ENCODE measurements at regions of chr12 and their contacts with region 1.

Region 1: GRCh38 chr12:49088190-49088931 is 6.2 kb downstream of the DHH start:
- DNase-seq: peak; percentile 61 to 66 (median 62)
- ATAC-seq: peak; percentile 94
- H3K4me3 ChIP-seq: no peak overlapping the region
- H3K4me1 ChIP-seq: peaks cover 26% of the 10 kb centered on the region
- CTCF ChIP-seq: peak; percentile 76

Region 2: GRCh38 chr12:48988030-48988649 is 100.2 kb before region 1 on chr12:
- intact Hi-C with region 1: no loop called
- DNase-seq: peak; percentile 61 to 87 (median 79)
- ATAC-seq: peak; percentile 82
- H3K4me3 ChIP-seq: no peak overlapping the region
- H3K4me1 ChIP-seq: peaks cover 4% of the 10 kb centered on the region
- CTCF ChIP-seq: peak; percentile 74

Region 3: DNA sequence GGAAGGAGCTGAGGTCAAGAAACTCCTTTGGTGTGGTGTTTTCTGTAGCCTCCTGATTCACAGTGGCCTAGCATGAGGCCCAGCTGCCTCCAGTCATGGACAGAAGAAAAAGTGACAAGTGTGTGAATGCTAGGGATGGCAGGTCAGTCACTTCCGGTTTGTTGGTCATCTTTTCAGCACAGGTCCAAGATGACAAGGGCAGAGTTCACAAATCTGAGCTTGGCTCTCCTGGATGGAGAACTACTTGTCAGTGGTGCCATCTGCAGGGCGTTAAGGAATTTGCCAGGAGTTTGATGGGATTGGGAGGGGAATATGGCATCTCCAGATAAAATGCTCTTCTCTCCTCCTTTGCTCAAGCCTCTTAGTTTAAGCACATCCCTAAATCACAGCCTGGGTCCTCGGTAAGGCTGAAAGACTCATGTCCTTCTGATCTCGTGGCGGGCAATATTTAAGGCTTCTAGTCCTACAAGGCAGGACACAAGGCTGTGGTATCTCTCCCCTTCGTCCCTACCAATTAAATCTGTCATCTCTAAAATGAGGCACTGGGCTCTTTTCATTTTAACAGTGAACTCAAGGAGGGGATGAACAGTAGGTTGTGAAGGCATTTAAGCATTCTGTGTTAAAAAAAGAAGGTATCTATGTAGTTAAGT is 32.8 kb after region 1 on chr12:
- intact Hi-C with region 1: loop called in 1 of 2 experiments (anchors 5 kb)
- DNase-seq: peak in 1 of 3 donors; percentile 63
- ATAC-seq: peak; percentile 97
- H3K4me3 ChIP-seq: no peak overlapping the region
- H3K4me1 ChIP-seq: no peaks in the 10 kb centered on the region
- CTCF ChIP-seq: peak; percentile 31

Measured in mucosa of descending colon (tissue), 3 donors.